ENCODE measurements at regions of chr2 and their contacts with region 1.

Region 1: DNA sequence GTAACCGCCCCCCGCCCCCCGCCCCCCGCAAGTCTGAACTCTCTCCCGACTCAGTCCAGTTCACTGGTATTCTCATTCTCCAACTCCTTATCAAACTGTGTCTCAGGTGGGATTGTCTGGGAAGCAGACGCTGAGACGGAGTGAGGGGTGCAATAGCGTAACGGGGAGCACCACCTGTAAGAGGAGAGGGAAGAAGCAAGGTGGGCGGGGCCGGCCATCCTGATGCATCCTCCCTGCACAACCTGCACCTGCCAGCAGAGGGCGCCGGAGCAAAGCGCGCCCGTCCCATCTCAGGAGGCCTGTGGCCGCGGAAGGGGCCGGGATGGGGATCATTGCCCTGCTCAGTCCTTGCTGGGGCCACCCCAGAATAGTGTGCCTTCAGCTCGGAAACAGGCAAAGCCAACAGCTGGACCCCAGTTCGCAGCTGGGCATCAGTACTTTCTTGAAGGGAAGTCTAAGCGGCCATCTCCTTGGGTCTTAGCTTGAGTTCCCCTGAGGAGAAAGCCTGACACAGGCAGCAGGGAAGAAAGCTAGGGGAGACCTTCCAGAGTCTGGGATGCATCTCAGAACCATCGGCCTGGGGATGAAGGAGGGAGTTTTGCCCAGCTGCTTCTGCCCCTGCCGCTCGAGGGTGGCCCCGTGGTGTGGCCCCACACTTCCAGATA is 208.0 kb downstream of the TFCP2L1 start:
- DNase-seq: peak; percentile 93
- ATAC-seq: peak; percentile 33
- H3K4me3 Mint-ChIP-seq: peak overlapping the region; percentile 72
- H3K27ac Mint-ChIP-seq: no peak overlapping the region
- H3K4me1 Mint-ChIP-seq: peaks cover 16% of the 10 kb centered on the region
- H3K27me3 Mint-ChIP-seq: peaks cover 48% of the 10 kb centered on the region
- CTCF ChIP-seq: peak; percentile 96

Region 2: DNA sequence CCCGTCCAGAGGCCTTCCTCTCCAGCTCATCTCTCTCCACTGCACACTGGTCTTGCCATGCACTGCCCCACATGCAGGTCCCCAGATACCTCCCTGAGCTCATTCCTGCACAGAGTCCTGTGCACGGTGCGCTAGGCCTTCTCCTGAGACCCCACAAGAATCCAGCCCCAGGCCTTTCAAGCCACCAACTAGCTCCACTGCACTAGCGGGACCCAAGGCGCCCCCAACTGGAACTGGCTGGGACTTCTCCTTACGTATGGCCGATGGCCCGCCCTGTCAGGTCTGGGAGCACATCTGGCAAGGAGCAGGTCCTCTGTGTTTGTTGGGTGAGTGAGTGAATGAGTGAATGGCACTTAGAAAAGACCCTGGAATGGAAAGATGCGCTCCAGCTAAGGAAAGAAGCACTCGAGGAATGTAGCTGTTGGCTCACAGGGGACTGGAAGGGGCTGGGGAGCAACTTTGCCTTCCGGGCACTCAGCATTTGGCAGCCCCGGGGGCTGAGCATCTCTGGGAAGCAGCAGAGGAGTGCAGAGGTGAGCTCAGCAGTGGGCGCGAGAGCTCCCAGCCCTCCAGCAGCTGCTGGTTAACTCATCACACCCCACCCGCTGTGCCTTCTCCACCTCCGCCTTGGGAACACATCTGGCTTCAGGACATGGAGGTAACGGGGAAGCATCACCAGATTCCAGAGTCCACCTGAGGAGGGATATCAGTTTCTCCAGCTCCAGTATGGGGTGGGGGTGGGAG is 118.2 kb before region 1 on chr2:
- CTCF ChIA-PET with region 1: interaction called, 11 read pairs
- POLR2A ChIA-PET with region 1: interaction called, 7 read pairs
- DNase-seq: peak; percentile 88
- ATAC-seq: peak; percentile 86
- H3K4me3 Mint-ChIP-seq: no peak overlapping the region
- H3K27ac Mint-ChIP-seq: peak overlapping the region; percentile 39; the same call in 1 of the 2 replicates
- H3K4me1 Mint-ChIP-seq: 0 out of 2 replicates have a peak, but pooled peaks cover 3% of the 10 kb centered on the region
- H3K27me3 Mint-ChIP-seq: no peaks in the 10 kb centered on the region
- CTCF ChIP-seq: peak; percentile 62

Region 3: GRCh38 chr2:121095257-121096080 is 18.5 kb after region 1 on chr2:
- CTCF ChIA-PET with region 1: interaction called, 50 read pairs
- POLR2A ChIA-PET with region 1: interaction called, 10 read pairs
- DNase-seq: peak; percentile 79
- ATAC-seq: peak; percentile 88
- H3K4me3 Mint-ChIP-seq: no peak overlapping the region
- H3K27ac Mint-ChIP-seq: no peak overlapping the region
- H3K4me1 Mint-ChIP-seq: no peaks in the 10 kb centered on the region
- H3K27me3 Mint-ChIP-seq: peaks cover 13% of the 10 kb centered on the region
- CTCF ChIP-seq: peak; percentile 64

Region 4: GRCh38 chr2:121356058-121356640 is 279.1 kb after region 1 on chr2:
- CTCF ChIA-PET with region 1: interaction called, 12 read pairs
- POLR2A ChIA-PET with region 1: interaction called, 3 read pairs
- DNase-seq: peak; percentile 59
- ATAC-seq: peak; percentile 91
- H3K4me3 Mint-ChIP-seq: no peak overlapping the region
- H3K27ac Mint-ChIP-seq: no peak overlapping the region
- H3K4me1 Mint-ChIP-seq: no peaks in the 10 kb centered on the region
- H3K27me3 Mint-ChIP-seq: no peaks in the 10 kb centered on the region
- CTCF ChIP-seq: peak; percentile 55; the same call in 1 of the 2 replicates